GM13976 (cell line): ENCODE measurements at regions of chr17 and their contacts with region 1.

Region 1: GRCh38 chr17:27396941-27397340 is 59.3 kb upstream of the KSR1 start:
- DNase-seq: no peak
- CTCF ChIP-seq: no peak

Region 2: DNA sequence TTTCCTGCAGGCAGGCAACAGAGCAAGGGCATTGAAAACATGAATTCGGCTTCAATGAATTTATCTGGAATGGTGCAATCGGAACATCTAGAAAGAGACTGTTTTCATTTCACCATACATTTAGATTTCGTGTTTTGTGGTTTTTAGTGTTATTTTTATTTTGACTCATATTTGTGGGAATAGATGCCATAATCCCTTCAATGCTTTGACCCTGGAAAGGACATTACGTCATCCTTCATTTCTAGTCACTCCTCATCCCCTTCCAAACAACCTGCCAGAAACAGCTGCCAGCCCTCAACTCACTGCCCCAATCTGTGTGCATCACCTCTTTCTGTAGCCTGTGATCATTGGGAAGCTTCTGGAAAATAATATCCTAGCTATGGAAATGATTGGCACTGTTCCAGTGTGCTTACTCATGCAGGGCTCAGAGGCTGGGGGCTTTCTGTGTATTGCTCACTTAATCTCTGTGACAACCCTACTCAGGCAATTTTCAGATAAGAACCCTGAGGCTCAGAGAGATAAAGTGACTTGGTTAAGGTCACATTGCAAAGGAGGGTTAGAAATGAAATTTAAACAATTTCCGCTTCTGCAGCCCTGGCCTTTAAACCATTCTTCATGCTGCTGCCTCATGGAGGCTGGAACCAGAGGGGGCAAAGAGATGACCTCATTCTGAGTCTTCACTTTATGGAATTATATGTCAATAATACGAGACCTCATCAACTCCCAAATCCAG is 49.8 kb after region 1 on chr17:
- in situ Hi-C with region 1: loop called (anchors 10 kb)
- DNase-seq: no peak
- CTCF ChIP-seq: no peak